PC-9 (cell line): ENCODE measurements at regions of chr7 and their contacts with region 1.

Region 1: GRCh38 chr7:21243265-21243664 is 184.6 kb upstream of the SP4 start:
- DNase-seq: no peak
- H3K4me3 ChIP-seq: no peak overlapping the region
- H3K27ac ChIP-seq: no peak overlapping the region
- H3K4me1 ChIP-seq: no peaks in the 10 kb centered on the region
- H3K27me3 ChIP-seq: no peaks in the 10 kb centered on the region
- CTCF ChIP-seq: no peak

Region 2: GRCh38 chr7:21276471-21277035 is 33.3 kb after region 1 on chr7:
- CTCF ChIA-PET with region 1: no interaction called
- POLR2A ChIA-PET with region 1: no interaction called
- intact Hi-C with region 1: no loop called
- DNase-seq: no peak
- H3K4me3 ChIP-seq: no peak overlapping the region
- H3K27ac ChIP-seq: no peak overlapping the region
- H3K4me1 ChIP-seq: no peaks in the 10 kb centered on the region
- H3K27me3 ChIP-seq: 0 out of 2 replicates have a peak, but pooled peaks cover 6% of the 10 kb centered on the region
- CTCF ChIP-seq: no peak

Region 3: GRCh38 chr7:21345361-21345760 is 102.1 kb after region 1 on chr7:
- CTCF ChIA-PET with region 1: no interaction called
- POLR2A ChIA-PET with region 1: interaction called, 25 read pairs
- intact Hi-C with region 1: no loop called
- DNase-seq: no peak
- H3K4me3 ChIP-seq: no peak overlapping the region
- H3K27ac ChIP-seq: no peak overlapping the region
- H3K4me1 ChIP-seq: no peaks in the 10 kb centered on the region
- H3K27me3 ChIP-seq: peaks cover 22% of the 10 kb centered on the region
- CTCF ChIP-seq: no peak